AG04450 (cell line): ENCODE measurements at regions of chr4 and their contacts with region 1.

Region 1: DNA sequence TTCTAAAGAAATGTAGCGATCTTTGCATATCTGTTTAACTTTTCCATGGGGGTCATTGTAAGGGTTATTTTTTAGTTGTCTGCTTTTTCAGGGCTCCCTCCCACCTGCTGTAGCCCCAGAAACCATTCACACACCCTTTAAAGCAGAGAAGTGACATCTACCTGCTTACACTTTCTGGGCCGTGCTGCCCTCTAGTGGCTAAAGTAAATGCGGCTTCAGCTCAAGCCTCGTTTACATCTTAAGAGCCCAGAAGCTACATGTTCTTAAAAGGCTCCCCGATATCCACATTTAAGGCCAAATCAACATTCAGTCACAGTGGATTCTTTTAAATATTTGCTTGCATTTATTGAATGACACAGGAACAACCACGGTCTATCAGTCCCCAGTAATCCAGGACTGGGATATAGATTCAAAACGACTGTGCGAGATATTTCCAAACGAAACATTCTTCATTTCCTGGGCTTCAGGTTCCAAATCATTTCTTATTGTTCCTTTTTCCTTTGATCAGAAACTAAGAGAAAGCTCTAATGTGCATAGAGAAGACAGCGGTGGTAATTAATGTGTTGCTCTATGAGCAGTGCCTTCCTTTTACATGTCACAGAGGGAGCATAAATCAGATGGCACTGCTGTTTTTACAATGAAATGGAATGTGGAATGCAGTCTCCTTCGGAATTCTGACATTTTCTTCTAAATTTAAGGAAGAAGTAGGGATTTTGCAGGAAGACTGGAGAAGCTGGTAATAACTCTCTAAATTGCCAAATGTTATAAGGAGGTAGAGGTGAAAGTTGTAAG is 119.9 kb downstream of the RASGEF1B start:
- DNase-seq: peak; percentile 56
- H3K4me3 ChIP-seq: no peak overlapping the region
- H3K27ac ChIP-seq: no peak overlapping the region
- H3K27me3 ChIP-seq: no peaks in the 10 kb centered on the region
- CTCF ChIP-seq: peak; percentile 98

Region 2: DNA sequence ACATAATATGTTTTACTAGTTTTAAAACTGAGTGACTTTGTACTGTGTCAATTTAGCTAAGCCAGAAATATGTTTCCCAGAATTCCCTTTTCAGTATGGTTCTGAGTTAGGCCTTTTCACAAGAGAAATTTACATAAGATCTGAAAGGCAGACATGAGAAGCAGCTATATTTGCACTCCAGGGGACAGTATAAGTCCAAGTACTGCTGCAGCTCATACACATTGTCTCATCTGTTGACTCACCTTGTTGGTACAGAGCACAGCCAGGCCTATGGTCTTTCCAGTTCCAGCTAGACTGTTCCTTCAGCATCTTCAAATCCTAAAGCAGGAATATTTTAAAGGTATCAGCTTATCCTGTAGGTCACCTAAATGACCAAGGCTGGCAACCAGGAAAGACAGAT is 267.8 kb before region 1 on chr4:
- CTCF ChIA-PET with region 1: interaction called, 21 read pairs
- POLR2A ChIA-PET with region 1: no interaction called
- DNase-seq: peak; percentile 10
- H3K4me3 ChIP-seq: no peak overlapping the region
- H3K27ac ChIP-seq: no peak overlapping the region
- H3K27me3 ChIP-seq: no peaks in the 10 kb centered on the region
- CTCF ChIP-seq: peak; percentile 58

Region 3: GRCh38 chr4:81135501-81135900 is 216.3 kb before region 1 on chr4:
- CTCF ChIA-PET with region 1: interaction called, 16 read pairs
- POLR2A ChIA-PET with region 1: no interaction called
- DNase-seq: no peak
- H3K4me3 ChIP-seq: no peak overlapping the region
- H3K27ac ChIP-seq: no peak overlapping the region
- H3K27me3 ChIP-seq: no peaks in the 10 kb centered on the region
- CTCF ChIP-seq: no peak

Region 4: DNA sequence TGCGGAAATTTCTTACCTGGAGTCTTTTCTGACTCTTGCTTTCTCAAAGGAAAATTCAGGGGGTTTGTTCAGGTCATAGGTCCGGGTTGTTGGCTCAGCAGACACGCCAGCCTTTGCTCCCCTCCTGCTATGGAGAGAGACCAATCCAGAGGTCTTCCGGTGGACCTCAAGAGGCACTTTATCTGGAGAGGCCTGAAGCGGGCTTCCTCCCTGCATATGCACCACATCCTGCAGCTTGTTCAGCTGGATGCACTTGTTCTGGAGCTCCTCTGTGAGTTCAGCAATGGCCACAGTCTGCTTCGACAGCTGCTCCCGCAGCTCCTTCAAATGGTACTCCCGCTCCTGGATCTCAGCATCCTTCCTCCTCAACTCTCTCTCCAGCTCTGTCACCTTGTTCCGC is 147.3 kb before region 1 on chr4:
- CTCF ChIA-PET with region 1: interaction called, 59 read pairs
- POLR2A ChIA-PET with region 1: no interaction called
- DNase-seq: no peak
- H3K4me3 ChIP-seq: no peak overlapping the region
- H3K27ac ChIP-seq: no peak overlapping the region
- H3K27me3 ChIP-seq: no peaks in the 10 kb centered on the region
- CTCF ChIP-seq: no peak

Region 5: GRCh38 chr4:81260443-81261101 is 91.3 kb before region 1 on chr4:
- CTCF ChIA-PET with region 1: interaction called, 13 read pairs
- POLR2A ChIA-PET with region 1: interaction called, 5 read pairs
- DNase-seq: no peak
- H3K4me3 ChIP-seq: no peak overlapping the region
- H3K27ac ChIP-seq: no peak overlapping the region
- H3K27me3 ChIP-seq: no peaks in the 10 kb centered on the region
- CTCF ChIP-seq: peak; percentile 43

Region 6: GRCh38 chr4:81326581-81326980 is 25.3 kb before region 1 on chr4:
- CTCF ChIA-PET with region 1: interaction called, 85 read pairs
- POLR2A ChIA-PET with region 1: no interaction called
- DNase-seq: no peak
- H3K4me3 ChIP-seq: no peak overlapping the region
- H3K27ac ChIP-seq: no peak overlapping the region
- H3K27me3 ChIP-seq: no peaks in the 10 kb centered on the region
- CTCF ChIP-seq: no peak

Region 7: DNA sequence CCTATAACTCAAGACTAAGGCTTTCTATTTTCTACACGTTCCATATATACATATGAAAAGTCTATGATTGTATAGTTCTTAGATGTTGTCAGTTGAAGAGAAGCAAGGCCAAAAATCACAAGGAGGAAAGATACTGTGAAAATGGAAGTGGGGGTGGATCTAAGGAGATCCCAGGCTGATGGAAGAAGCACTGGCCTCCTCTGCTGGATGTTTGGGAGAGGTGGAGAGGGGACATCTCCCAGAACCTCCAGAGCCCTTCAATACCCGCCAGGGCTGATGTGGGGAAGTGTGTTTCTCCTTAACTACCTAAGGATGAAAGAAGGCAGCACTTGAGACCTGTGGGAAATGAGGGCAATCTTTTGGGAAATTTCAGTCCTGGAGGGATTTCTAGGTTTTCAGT is 52.4 kb after region 1 on chr4:
- CTCF ChIA-PET with region 1: no interaction called
- POLR2A ChIA-PET with region 1: no interaction called
- DNase-seq: no peak
- H3K4me3 ChIP-seq: no peak overlapping the region
- H3K27ac ChIP-seq: no peak overlapping the region
- H3K27me3 ChIP-seq: no peaks in the 10 kb centered on the region
- CTCF ChIP-seq: 0 out of 2 replicates have a peak, but pooled peaks have one; percentile 14